Posterior vena cava (tissue), 2 donors: ENCODE measurements at regions of chr16 and their contacts with region 1.

Region 1: GRCh38 chr16:84970447-84971127 is 40.7 kb downstream of the ZDHHC7 start:
- DNase-seq: peak; percentile 93

Region 2: GRCh38 chr16:84919269-84919668 is 51.3 kb before region 1 on chr16:
- intact Hi-C with region 1: loop called in 1 of 2 experiments (anchors 2 kb)
- DNase-seq: no peak

Region 3: GRCh38 chr16:84933774-84934631 is 36.6 kb before region 1 on chr16:
- intact Hi-C with region 1: loop called in 1 of 2 experiments (anchors 5 kb)
- DNase-seq: peak; percentile 93

Region 4: DNA sequence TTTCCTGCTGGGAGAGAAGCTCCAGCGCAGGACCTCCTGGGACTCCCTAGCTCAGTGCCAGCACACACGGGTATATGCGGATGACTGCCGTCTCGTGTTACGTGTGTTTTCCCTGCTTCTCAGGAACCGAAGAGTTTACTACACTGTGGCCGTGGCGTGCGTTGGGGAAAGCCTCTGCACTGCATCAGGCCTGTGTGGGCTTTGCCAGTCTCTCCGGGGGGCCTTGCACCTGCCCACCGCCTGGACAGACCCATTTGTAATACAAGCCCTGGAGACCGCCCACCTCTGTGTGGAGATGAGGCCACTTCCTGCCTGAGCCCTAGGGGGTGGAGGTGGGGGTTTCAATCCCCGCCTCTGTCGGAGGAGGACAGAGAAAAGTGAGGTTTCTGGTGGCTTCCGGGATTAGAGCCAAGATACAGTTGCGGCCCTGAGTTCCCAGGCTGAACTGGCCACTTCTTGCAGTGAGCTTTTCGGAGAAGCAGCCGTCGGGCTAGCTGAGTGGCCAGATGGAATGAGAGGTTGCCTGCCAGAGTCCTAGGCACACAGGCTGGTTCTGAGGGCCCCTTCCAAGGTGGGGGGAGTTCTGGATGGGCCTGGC is 599.1 kb after region 1 on chr16:
- intact Hi-C with region 1: no loop called
- DNase-seq: no peak